ENCODE measurements at regions of chr5 and their contacts with region 1.

Region 1: DNA sequence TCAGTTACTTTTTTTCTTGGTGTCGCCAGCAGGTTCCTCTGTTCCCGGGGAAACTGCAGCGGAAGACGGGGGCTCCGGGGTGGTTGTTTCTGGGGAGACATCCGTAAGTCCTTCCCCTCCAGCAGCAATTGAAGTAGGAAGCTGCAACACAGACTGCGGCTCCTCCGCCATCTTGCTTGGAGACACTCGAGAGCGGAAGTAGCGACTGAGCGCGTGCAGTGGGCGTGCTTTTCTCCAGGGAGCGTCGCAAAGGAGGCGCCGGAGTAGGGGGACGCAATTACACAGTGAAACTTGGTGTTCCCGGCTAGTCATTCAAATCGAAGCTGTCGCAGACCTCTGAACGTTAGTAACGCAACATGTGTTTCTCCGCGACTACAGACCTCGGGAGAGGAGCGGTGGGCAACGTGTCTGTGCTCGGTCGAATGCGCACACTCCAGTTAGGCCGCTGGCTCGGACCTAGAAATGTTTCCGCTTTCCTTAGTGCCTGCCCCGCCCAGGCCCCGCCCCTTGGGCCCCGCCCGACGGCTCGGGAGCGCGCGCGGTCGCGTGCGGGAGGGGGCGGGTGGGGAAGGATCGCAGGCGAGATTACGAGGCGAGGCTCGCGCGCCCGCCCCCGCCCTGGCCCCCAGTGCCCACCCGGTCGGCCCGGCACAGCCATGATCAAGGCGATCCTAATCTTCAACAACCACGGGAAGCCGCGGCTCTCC is at the starts of genes AP3S1 and ATG12:
- DNase-seq: peak; percentile 93
- H3K4me3 Mint-ChIP-seq: peak within 1 kb of the TSS; percentile 95
- H3K27ac Mint-ChIP-seq: peak within 1 kb of the TSS; percentile 100
- H3K4me1 Mint-ChIP-seq: peaks cover 49% of the 10 kb centered on the region
- H3K27me3 Mint-ChIP-seq: no peaks in the 10 kb centered on the region
- total RNA-seq, gene AP3S1: 85.7 to 87.6 TPM
- total RNA-seq, gene ATG12: 40.6 to 41.9 TPM

Region 2: DNA sequence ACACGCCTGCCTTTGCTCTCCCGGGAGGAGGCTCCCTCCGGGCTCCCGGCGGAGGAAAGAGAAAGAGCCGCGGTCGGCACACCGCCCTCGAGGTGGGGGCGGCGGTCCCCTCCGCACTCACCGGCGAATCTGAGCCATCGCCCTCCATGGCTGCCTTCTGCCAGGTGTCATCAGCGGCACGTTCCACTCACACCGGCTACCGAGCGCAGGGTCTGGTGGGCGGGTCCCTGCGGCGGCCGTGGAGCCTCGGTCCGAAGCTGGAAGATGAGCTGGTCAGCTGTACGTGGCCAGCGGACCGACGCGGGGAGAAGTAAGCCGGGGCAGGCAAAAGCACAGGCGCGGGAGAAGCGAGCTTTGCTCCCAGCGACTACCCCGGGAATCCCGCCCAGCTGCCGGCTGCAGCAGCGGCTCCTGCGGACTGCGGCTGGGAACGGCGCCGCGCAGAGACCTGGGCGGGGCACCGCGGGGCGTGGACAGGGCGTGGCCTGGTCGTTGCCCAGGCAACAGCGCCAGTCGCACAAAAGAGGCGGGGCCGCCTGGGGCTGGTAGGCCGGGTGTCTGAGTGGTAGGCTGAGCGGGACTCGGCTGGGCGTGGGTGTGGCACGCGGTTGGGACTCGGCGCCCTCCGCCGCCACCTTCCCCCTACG is 671.9 kb before region 1 on chr5 and contains the start of gene TRIM36:
- CTCF ChIA-PET with region 1: interaction called, 3 read pairs
- POLR2A ChIA-PET with region 1: no interaction called
- intact Hi-C with region 1: loop called (anchors 5 kb)
- DNase-seq: peak; percentile 94
- H3K4me3 Mint-ChIP-seq: peak within 1 kb of the TSS; percentile 79
- H3K27ac Mint-ChIP-seq: peak within 1 kb of the TSS; percentile 26
- H3K4me1 Mint-ChIP-seq: peaks cover 6% of the 10 kb centered on the region
- H3K27me3 Mint-ChIP-seq: peaks cover 58% of the 10 kb centered on the region
- total RNA-seq, gene TRIM36: not detected

Region 3: GRCh38 chr5:115296124-115297022 is 545.2 kb before region 1 on chr5 and contains the start of gene CCDC112:
- CTCF ChIA-PET with region 1: no interaction called
- POLR2A ChIA-PET with region 1: no interaction called
- intact Hi-C with region 1: loop called (anchors 1 kb)
- DNase-seq: peak; percentile 87
- H3K4me3 Mint-ChIP-seq: peak within 1 kb of the TSS; percentile 76
- H3K27ac Mint-ChIP-seq: no peak within 1 kb of the TSS
- H3K4me1 Mint-ChIP-seq: peaks cover 7% of the 10 kb centered on the region
- H3K27me3 Mint-ChIP-seq: peaks cover 8% of the 10 kb centered on the region
- total RNA-seq, gene CCDC112: 1.7 to 1.8 TPM

Region 4: DNA sequence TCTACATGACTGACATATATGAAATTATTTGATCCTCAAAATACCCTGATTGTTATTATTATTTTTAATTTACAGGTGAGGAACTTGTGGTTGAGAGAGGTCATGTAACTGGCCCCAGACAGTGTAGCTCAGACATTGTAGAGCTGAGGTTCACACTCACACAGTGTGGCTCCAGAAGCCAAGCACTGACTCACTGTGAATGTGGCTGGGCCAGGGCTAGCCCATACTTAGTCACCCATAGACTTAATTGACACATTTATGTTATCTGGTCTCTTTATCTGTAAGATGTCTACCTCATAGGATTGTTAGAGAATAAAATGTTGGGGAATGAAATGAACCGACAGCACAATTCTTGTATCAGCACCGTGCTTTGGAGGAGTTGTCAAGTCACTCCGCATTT is 520.2 kb before region 1 on chr5:
- CTCF ChIA-PET with region 1: no interaction called
- POLR2A ChIA-PET with region 1: no interaction called
- intact Hi-C with region 1: no loop called
- DNase-seq: peak; percentile 12
- H3K4me3 Mint-ChIP-seq: no peak overlapping the region
- H3K27ac Mint-ChIP-seq: no peak overlapping the region
- H3K4me1 Mint-ChIP-seq: no peaks in the 10 kb centered on the region
- H3K27me3 Mint-ChIP-seq: peaks cover 27% of the 10 kb centered on the region

Region 5: GRCh38 chr5:115460472-115460871 is 381.1 kb before region 1 on chr5:
- CTCF ChIA-PET with region 1: no interaction called
- POLR2A ChIA-PET with region 1: no interaction called
- intact Hi-C with region 1: loop called (anchors 5 kb)
- DNase-seq: peak; percentile 25
- H3K4me3 Mint-ChIP-seq: no peak overlapping the region
- H3K27ac Mint-ChIP-seq: no peak overlapping the region
- H3K4me1 Mint-ChIP-seq: peaks cover 15% of the 10 kb centered on the region
- H3K27me3 Mint-ChIP-seq: peaks cover 17% of the 10 kb centered on the region

Region 6: GRCh38 chr5:115625579-115626444 is 215.7 kb before region 1 on chr5 and contains the start of gene TMED7:
- CTCF ChIA-PET with region 1: interaction called, 5 read pairs
- POLR2A ChIA-PET with region 1: interaction called, 5 read pairs
- intact Hi-C with region 1: loop called (anchors 1 kb)
- DNase-seq: peak; percentile 100
- H3K4me3 Mint-ChIP-seq: no peak within 1 kb of the TSS
- H3K27ac Mint-ChIP-seq: peak within 1 kb of the TSS; percentile 92
- H3K4me1 Mint-ChIP-seq: peaks cover 23% of the 10 kb centered on the region
- H3K27me3 Mint-ChIP-seq: no peaks in the 10 kb centered on the region
- total RNA-seq, gene TMED7: 42.2 to 44.1 TPM

Region 7: GRCh38 chr5:115857636-115858309 is 16.2 kb after region 1 on chr5:
- CTCF ChIA-PET with region 1: no interaction called
- POLR2A ChIA-PET with region 1: interaction called, 4 read pairs
- intact Hi-C with region 1: loop called (anchors 2 kb)
- DNase-seq: no peak
- H3K4me3 Mint-ChIP-seq: no peak overlapping the region
- H3K27ac Mint-ChIP-seq: no peak overlapping the region
- H3K4me1 Mint-ChIP-seq: peaks cover 26% of the 10 kb centered on the region
- H3K27me3 Mint-ChIP-seq: no peaks in the 10 kb centered on the region

Region 8: DNA sequence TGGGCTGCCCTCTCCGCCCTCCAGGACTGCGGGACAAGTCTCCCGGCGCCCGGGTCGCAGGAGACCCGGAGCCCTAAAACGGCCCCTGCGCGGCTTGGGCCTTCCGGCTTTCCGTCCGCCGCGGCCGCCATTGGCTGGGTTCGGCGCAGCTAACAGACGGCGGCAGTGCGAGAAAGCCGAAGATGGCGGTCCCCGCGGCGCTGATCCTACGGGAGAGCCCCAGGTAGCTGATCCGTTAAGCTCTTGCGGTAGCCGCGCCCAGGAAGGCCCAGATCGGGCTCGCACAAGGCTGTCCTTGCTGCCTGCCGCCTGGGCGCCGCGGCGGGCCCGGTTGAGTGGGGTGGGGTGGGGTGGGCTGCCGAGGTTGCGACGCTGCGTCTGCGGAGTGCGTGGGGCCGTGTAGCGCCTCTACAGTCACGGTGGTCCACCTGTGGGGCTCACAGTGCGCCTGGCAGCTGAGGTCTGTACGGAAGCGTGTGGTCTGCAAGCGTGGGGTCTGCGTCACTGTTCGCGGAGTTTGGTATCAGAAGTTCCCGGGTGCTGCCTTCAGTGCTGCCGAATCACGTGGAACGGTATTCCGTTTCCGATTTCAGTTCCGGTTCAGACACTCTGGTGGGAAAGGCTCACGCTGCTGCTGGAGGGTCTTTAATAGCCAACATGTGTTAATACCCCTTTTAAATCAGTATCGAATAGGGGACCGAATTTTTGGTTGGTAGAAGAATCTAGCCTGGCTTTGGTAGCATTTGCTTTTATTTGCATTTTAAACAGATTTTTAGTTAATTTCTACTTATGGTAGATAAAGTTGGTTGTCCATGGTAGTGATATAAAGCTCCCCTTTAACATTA is 243.6 kb after region 1 on chr5 and contains the start of gene COMMD10:
- CTCF ChIA-PET with region 1: interaction called, 4 read pairs
- POLR2A ChIA-PET with region 1: no interaction called
- intact Hi-C with region 1: loop called (anchors 1 kb)
- DNase-seq: peak; percentile 81
- H3K4me3 Mint-ChIP-seq: peak within 1 kb of the TSS; percentile 88
- H3K27ac Mint-ChIP-seq: peak within 1 kb of the TSS; percentile 93
- H3K4me1 Mint-ChIP-seq: peaks cover 37% of the 10 kb centered on the region
- H3K27me3 Mint-ChIP-seq: no peaks in the 10 kb centered on the region
- total RNA-seq, gene COMMD10: 22.1 to 24.3 TPM

Region 9: GRCh38 chr5:116727248-116727647 is 885.7 kb after region 1 on chr5:
- CTCF ChIA-PET with region 1: no interaction called
- POLR2A ChIA-PET with region 1: no interaction called
- intact Hi-C with region 1: no loop called
- DNase-seq: no peak
- H3K4me3 Mint-ChIP-seq: no peak overlapping the region
- H3K27ac Mint-ChIP-seq: no peak overlapping the region
- H3K4me1 Mint-ChIP-seq: no peaks in the 10 kb centered on the region
- H3K27me3 Mint-ChIP-seq: no peaks in the 10 kb centered on the region

Measured in activated CD4-positive, alpha-beta memory T cell treated with anti-CD3 and anti-CD28 coated beads for 36 hours (primary cell).